A549 (cell line): ENCODE measurements at regions of chr17 and their contacts with region 1.

Region 1: DNA sequence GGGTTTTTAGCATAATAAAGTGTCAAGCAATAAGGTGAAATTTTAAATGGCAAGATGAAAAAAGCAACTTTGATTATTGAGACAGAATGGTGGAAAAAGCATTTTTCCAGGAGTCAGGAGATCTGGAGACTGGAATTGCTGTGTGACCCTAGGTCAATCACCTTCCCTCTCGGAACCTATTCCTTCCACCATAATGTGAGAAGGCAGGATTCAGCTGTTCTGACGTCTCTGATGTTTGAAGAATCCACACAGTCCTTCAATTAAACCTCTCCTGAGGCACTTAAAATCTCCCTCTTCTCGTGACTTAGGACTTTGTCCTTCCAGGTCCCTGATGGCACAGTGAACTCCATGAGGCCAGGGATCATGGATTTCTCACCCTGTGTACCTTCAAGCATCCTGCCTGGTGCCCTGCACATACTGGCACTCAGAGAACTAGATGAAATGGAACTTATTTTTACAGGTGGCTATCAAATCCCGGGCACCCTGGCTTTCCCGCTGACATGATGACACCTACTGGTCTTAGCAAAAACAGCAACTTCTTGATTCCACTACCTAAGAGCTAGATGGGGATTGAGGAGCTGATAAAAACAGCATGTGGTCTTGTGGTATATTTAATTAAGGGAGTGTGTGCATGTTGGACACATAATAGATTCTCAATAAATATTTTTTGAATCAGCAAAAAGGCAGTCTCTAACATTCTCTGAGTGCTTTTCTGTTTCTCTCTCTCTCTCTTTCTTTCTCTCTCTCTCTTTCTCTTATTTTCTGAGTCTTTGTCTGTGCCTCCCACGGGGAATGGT is 2.3 kb upstream of the CCDC182 start:
- DNase-seq: peak; percentile 79 to 84
- ATAC-seq: peak; percentile 80 to 91
- H3K4me3 ChIP-seq: no peak overlapping the region
- H3K27ac ChIP-seq: no peak overlapping the region
- H3K4me1 ChIP-seq: no peaks in the 10 kb centered on the region
- CTCF ChIP-seq: peak; percentile 96
- EP300 ChIP-seq: no peak
- POLR2A ChIP-seq: no peak
- RAD21 ChIP-seq: peak; percentile 93 to 98

Region 2: GRCh38 chr17:57121338-57122042 is 625.9 kb before region 1 on chr17:
- CTCF ChIA-PET with region 1: interaction called, 51 read pairs
- POLR2A ChIA-PET with region 1: no interaction called
- DNase-seq: peak; percentile 56 to 77
- ATAC-seq: peak; percentile 82 to 89
- H3K4me3 ChIP-seq: no peak overlapping the region
- H3K27ac ChIP-seq: no peak overlapping the region
- H3K4me1 ChIP-seq: 0 out of 3 replicates have a peak, but pooled peaks cover 4% of the 10 kb centered on the region
- CTCF ChIP-seq: peak; percentile 63
- EP300 ChIP-seq: no peak
- POLR2A ChIP-seq: no peak
- RAD21 ChIP-seq: peak; percentile 54 to 57

Region 3: DNA sequence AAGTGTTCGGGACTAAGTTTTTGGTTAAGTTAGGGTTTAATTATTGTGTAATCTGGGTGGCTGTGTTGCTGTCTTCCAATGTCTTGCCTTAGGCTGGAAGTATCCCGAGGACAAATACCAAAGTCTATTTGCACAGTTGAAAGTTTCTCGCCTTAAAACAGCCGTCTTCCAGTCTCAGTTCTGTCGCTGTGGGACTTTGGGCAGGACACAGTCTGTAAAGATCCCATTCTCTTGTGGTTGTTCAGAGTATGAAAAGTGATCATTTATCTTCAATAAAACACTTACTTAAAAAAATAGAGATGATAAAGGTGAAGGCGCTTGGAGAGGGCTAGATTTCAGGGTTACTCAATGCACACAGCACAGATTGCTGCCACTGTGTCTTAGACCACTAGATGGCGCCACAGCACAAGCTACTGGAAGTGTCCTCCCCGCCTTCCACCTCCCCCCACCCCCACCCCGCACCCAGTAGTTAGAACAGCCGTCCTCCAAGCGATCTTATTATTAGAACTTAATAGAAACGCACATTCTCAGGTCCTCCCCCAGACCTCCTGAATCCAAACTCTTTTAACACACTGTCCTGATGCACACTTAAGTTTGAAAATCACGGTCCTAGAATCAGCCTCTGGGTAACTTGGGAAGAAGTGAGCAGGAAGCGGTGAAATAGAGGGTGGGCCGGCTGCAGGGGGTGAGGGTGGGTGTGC is 616.5 kb before region 1 on chr17:
- CTCF ChIA-PET with region 1: interaction called, 51 read pairs
- POLR2A ChIA-PET with region 1: no interaction called
- DNase-seq: peak; percentile 82 to 99
- ATAC-seq: peak; percentile 95 to 96
- H3K4me3 ChIP-seq: peak overlapping the region; percentile 38
- H3K27ac ChIP-seq: peak overlapping the region; percentile 66 to 84
- H3K4me1 ChIP-seq: no peaks in the 10 kb centered on the region
- CTCF ChIP-seq: peak; percentile 99
- EP300 ChIP-seq: no peak
- POLR2A ChIP-seq: no peak
- RAD21 ChIP-seq: peak; percentile 92 to 100

Region 4: DNA sequence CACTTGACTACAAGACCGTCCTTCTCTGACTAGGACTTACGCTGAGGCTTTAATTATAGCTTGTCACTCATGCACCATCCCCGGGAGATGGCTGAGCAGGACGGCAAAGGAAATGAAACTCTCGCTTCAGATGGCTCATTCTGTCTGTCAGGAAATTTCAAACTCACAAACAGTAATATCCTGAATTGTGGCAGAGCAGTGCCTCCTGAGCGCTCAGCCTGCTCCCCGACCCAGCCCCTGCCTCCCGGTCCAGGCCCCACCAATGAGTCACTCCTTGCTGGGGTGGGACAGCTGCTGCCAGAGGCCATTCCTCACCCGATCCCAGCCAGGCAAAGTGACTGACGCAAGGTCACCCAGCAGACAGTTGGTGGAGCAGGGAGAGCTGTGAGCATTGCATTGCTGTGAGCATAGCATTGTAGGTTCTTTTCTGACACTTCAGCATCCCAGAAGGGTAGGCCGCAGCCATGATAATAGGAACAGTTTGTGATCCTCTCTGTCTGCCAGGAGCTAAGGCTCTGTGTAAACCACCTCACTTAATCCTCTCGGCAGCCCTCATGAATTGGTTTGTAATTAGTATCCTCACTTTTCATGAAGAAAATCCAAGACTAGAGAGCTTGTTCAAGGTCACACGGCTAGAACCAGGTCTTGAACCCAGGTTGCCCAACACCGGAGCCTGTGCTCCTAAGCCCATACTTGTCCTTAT is 23.2 kb before region 1 on chr17:
- CTCF ChIA-PET with region 1: interaction called, 11 read pairs
- POLR2A ChIA-PET with region 1: no interaction called
- DNase-seq: no peak
- ATAC-seq: no peak; a peak in 1 of 6 replicates
- H3K4me3 ChIP-seq: no peak overlapping the region
- H3K27ac ChIP-seq: no peak overlapping the region
- H3K4me1 ChIP-seq: no peaks in the 10 kb centered on the region
- CTCF ChIP-seq: no peak
- EP300 ChIP-seq: no peak
- POLR2A ChIP-seq: no peak
- RAD21 ChIP-seq: no peak

Region 5: DNA sequence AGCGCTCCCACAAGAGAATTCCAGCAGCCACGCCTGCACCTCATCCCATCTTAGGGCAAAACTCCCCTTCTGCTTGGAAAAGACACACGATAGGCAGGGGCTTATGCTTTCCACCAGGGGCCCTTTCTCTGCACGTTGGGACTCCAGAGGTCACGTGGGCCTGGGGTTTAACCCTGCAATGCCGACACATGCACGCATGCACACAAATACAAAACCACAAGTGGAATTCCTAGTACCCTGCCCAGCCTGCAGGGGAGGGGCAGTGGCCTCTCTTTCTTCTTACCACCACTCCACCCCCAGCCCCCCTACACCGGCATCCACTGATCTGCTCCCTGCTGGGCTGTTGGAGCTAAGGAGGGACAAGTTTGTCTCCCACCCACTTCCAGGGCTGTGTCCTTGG is 14.5 kb after region 1 on chr17:
- CTCF ChIA-PET with region 1: interaction called, 37 read pairs
- POLR2A ChIA-PET with region 1: no interaction called
- DNase-seq: no peak
- ATAC-seq: no peak; a peak in 2 of 6 replicates
- H3K4me3 ChIP-seq: no peak overlapping the region
- H3K27ac ChIP-seq: 0 out of 6 replicates have a peak overlapping the region, but pooled peaks of 1 of the 2 experiments have one; percentile 6
- H3K4me1 ChIP-seq: peaks cover 15% of the 10 kb centered on the region
- CTCF ChIP-seq: no peak
- EP300 ChIP-seq: no peak
- POLR2A ChIP-seq: no peak
- RAD21 ChIP-seq: no peak

Region 6: GRCh38 chr17:57810721-57811637 is 63.6 kb after region 1 on chr17:
- CTCF ChIA-PET with region 1: no interaction called
- POLR2A ChIA-PET with region 1: no interaction called
- DNase-seq: no peak
- ATAC-seq: peak; percentile 43 to 63; a peak in 4 of 6 replicates
- H3K4me3 ChIP-seq: no peak overlapping the region
- H3K27ac ChIP-seq: no peak overlapping the region
- H3K4me1 ChIP-seq: no peaks in the 10 kb centered on the region
- CTCF ChIP-seq: no peak
- EP300 ChIP-seq: no peak
- POLR2A ChIP-seq: no peak
- RAD21 ChIP-seq: no peak